Dorsolateral prefrontal cortex (tissue), 120 donors: ENCODE measurements at regions of chr4 and their contacts with region 1.

Region 1: DNA sequence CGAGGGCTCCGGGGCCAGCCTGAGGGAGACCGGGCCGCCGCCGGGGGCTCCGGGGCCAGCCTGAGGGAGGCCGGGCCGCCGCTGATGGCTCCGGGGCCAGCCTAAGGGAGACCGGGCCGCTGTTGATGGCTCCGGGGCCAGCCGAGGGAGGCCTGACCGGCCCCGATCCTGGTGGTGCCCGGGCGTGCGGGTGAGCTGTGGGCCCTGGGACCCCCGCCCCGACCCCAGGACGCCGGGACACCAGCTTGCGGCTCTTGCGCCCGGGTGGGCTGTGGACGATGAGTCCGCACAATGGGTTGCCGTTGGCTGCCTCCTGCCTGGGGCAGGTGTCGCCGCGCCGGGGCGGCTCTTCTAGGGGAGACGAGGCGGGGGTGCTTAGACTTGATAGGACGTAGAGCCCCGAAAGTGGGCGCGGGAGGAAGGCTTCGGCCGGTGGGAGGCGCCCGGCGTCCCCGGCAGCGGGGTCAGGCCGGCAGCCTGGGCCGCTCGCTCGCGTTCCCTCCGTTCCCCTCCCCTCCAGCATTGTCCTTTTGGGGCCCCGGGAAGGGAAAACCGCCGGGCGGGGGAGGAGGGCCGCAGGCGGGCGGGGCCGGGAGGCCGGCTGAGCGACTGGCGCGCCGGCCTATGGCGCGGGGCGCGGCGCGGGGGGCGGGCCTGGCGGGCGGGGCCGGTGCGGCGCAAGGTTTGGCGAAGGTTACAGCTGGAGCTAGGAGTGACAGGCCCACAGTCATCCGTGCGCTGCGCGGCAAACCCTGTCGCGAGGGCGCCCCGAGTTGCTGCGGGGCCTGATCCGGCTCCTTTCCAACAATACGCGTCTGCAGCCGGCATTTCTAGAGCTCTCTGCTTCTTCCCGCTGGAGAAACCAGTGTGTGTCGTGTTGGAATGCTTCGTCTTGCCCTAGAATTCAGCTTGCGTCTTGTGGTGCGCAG is 790 bp downstream of the KIAA0232 start:
- DNase-seq: peak; percentile 83 to 95 (median 91)
- H3K4me3 ChIP-seq: peak overlapping the region; percentile 66 to 100 (median 97)
- H3K27ac ChIP-seq: peak overlapping the region; percentile 84 to 100 (median 99)
- H3K27me3 ChIP-seq: no peaks in the 10 kb centered on the region
- CTCF ChIP-seq: peak in 45 of 56 donors; percentile 6 to 65 (median 36)

Region 2: DNA sequence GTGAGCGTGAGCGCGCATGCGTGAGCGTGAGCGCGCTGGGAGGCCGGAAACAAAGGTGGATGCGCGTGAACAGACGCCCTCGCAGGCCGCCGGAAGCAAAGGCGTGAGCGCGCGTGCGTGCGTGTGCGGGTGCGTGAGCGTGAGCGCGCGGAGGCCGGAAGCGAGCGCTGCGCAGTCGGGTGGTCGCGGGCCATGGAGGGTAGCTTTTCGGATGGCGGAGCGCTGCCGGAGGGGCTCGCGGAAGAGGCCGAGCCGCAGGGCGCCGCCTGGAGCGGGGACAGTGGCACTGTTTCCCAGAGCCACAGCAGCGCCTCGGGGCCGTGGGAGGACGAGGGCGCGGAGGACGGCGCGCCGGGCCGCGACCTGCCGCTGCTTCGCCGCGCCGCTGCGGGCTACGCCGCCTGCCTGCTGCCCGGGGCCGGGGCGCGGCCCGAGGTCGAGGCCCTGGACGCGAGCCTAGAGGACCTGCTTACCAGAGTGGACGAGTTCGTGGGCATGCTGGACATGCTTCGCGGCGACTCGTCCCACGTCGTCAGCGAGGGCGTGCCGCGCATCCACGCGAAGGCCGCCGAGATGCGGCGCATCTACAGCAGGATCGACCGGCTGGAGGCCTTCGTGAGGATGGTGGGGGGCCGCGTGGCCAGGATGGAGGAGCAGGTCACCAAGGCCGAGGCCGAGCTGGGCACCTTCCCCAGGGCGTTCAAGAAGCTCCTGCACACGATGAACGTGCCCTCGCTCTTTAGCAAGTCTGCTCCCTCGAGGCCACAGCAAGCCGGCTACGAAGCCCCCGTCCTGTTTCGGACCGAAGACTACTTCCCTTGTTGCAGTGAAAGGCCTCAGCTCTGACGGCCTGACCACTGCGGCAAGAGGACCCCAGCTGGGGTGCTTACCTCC is 67.1 kb before region 1 on chr4 and contains the start of gene BLOC1S4:
- intact Hi-C with region 1: loop called in 1 of 2 experiments (anchors 2 kb)
- DNase-seq: peak; percentile 71 to 88 (median 84)
- H3K4me3 ChIP-seq: peak within 1 kb of the TSS; percentile 63 to 96 (median 83)
- H3K27ac ChIP-seq: peak within 1 kb of the TSS; percentile 34 to 99 (median 90)
- H3K27me3 ChIP-seq: no peaks in the 10 kb centered on the region
- CTCF ChIP-seq: peak in 43 of 56 donors; percentile 5 to 59 (median 30)
- total RNA-seq, gene BLOC1S4: 5.0 to 12.2 (median 9.0) TPM

Region 3: GRCh38 chr4:6855692-6856297 is 72.5 kb after region 1 on chr4:
- intact Hi-C with region 1: loop called in 1 of 2 experiments (anchors 5 kb)
- DNase-seq: no peak
- H3K4me3 ChIP-seq: peak overlapping the region in 1 of 59 donors; percentile 1
- H3K27ac ChIP-seq: peak overlapping the region in 51 of 59 donors; percentile 2 to 82 (median 55)
- H3K27me3 ChIP-seq: no peaks in the 10 kb centered on the region
- CTCF ChIP-seq: no peak

Region 4: GRCh38 chr4:6885951-6886557 is 102.7 kb after region 1 on chr4:
- intact Hi-C with region 1: loop called in 1 of 2 experiments (anchors 5 kb)
- DNase-seq: peak; percentile 42 to 90 (median 70)
- H3K4me3 ChIP-seq: peak overlapping the region in 8 of 59 donors; percentile 4 to 32 (median 13)
- H3K27ac ChIP-seq: peak overlapping the region in 57 of 59 donors; percentile 18 to 85 (median 70)
- H3K27me3 ChIP-seq: no peaks in the 10 kb centered on the region
- CTCF ChIP-seq: peak in 55 of 56 donors; percentile 21 to 79 (median 58)

Region 5: DNA sequence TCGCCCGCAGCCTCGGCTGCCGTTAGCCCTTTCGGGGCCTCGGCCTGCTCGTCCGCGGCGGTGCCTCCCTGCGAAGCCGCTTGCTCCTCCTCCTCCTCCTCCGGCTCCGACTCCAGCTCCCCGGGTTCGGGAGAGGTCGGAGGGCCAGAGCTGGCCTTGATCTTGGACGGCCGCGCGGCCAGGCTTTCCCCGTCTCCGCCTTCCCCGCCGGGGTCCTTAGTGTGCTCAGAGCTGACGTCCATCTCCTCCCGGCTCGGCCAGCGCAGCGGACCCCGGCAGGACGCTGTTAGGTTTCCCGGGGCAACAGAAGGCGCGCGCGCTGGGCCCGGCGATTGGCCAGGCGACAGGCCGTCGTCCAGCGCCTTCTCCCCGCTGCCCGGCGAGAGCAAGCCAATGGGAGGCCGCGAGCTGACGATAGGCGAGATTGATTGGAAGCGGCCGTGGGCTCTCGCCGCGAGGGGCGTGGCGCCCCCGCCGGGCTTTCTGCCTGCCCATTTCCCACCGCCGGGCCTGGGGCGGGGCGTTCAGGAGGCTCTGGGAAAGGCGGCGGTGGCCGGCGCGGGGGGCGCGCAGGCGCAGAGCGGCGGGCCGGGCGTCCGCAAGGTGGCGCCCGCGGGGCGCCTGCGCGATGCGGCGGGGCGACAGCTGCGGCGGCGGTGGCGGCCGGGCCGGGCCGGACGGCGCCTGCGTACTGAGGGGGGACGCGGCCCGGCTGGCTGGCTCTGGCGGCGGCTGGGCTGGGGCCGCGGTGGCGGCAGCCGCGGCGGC is 259.6 kb after region 1 on chr4 and contains the start of gene TADA2B:
- intact Hi-C with region 1: loop called (anchors 2 to 10 kb)
- DNase-seq: peak; percentile 91 to 98 (median 97)
- H3K4me3 ChIP-seq: peak within 1 kb of the TSS; percentile 74 to 100 (median 97)
- H3K27ac ChIP-seq: peak within 1 kb of the TSS in 56 of 59 donors; percentile 53 to 95 (median 82)
- H3K27me3 ChIP-seq: no peaks in the 10 kb centered on the region
- CTCF ChIP-seq: peak in 52 of 56 donors; percentile 7 to 73 (median 51)
- total RNA-seq, gene TADA2B: 19.6 to 36.0 (median 26.7) TPM